Activated CD4-positive, alpha-beta T cell treated with anti-CD3 and anti-CD28 coated beads, Interleukin-2, amount 10 ng/mL, durations not matched to agents 24 days and 14 days (primary cell): ENCODE measurements at regions of chr7 and their contacts with region 1.

Region 1: DNA sequence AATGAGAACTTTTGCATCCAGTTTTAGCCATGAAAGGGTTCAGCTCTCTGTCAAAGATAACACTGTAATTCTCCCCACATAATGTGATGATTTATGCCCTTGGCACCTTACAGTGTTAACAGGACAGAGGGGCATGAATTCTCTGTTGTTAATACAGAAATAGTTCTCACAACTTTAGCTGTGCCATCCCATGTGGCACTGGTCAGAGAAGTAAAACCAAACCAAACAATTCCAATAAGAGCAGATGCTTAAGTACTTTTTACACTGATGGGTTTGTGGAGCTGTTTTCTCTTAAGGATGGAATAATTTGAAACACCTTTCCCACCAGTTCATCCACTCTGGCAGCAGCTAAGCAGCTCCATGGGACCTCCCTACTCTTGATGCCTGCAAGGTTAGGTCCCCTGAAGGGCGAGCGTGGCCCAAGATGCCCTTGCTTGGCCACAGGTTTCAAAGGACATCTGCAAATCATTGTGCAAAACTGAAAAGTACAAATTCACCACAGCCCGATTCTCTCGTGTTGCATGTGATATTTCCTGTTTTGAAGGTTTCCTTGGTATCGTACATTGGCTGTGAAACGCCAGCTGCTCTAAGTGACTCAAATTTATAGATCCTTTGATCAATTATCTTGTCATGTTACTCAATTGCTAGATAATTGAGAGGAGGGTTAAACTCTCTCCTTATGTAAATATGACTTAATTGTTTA is 82.5 kb upstream of the CREB5 start:
- DNase-seq: peak; percentile 76
- H3K4me3 Mint-ChIP-seq: peak overlapping the region; percentile 50
- H3K27ac Mint-ChIP-seq: no peak overlapping the region
- H3K4me1 Mint-ChIP-seq: peaks cover 19% of the 10 kb centered on the region
- H3K27me3 Mint-ChIP-seq: peaks cover 8% of the 10 kb centered on the region

Region 2: GRCh38 chr7:28144266-28144665 is 185.5 kb before region 1 on chr7:
- intact Hi-C with region 1: no loop called
- DNase-seq: no peak
- H3K4me3 Mint-ChIP-seq: no peak overlapping the region
- H3K27ac Mint-ChIP-seq: no peak overlapping the region
- H3K4me1 Mint-ChIP-seq: peaks cover 1% of the 10 kb centered on the region
- H3K27me3 Mint-ChIP-seq: peaks cover 4% of the 10 kb centered on the region

Region 3: GRCh38 chr7:28292834-28293526 is 36.8 kb before region 1 on chr7:
- intact Hi-C with region 1: loop called (anchors 2 kb)
- DNase-seq: no peak
- H3K4me3 Mint-ChIP-seq: no peak overlapping the region
- H3K27ac Mint-ChIP-seq: no peak overlapping the region
- H3K4me1 Mint-ChIP-seq: peaks cover 8% of the 10 kb centered on the region
- H3K27me3 Mint-ChIP-seq: peaks cover 34% of the 10 kb centered on the region